ENCODE measurements at regions of chr10 and their contacts with region 1.

Region 1: GRCh38 chr10:73899423-73899822 is 11.5 kb upstream of the PLAU start:
- DNase-seq: no peak
- ATAC-seq: no peak
- H3K4me3 ChIP-seq: no peak overlapping the region
- H3K27ac ChIP-seq: no peak overlapping the region
- H3K4me1 ChIP-seq: peaks cover 0 to 3% of the 10 kb centered on the region in 2 donors
- H3K27me3 ChIP-seq: no peaks in the 10 kb centered on the region
- CTCF ChIP-seq: no peak
- POLR2A ChIP-seq: no peak

Region 2: DNA sequence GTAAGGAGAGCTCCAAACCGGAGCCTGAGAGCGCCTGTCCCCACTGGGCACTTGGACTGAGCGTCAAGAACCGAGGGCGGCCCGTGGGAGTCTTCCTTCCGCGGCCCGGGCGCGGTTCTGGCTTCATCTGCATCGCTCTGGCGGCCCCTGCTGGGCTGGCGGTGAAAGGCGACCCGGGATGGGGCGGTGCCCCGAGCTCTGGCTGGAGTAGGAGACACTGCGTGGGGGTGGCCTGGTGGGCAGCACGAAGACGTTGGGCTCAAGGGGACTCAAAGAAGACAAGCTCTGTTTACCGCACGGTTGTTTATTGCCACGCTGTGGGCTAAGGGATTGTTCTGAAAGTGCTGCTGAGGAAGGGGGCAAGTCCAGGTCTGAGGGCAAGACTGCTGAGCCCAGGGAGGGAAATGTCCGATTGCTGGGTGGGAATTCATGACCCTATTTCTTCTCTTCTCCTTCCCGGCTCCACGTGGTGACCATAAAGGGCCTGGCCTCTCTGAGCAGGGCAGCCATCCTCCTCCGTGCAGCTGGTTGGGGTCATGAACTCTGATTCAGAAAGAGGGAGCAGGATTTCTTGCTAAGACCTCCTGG is 41.3 kb after region 1 on chr10:
- in situ Hi-C with region 1: loop called in 1 of 4 experiments (anchors 5 kb)
- intact Hi-C with region 1: no loop called
- DNase-seq: peak; percentile 63 to 79
- ATAC-seq: peak; percentile 86 to 90
- H3K4me3 ChIP-seq: peak overlapping the region in 3 of 4 donors; percentile 13 to 39 (median 30)
- H3K27ac ChIP-seq: peak overlapping the region; percentile 69 to 82 (median 80)
- H3K4me1 ChIP-seq: peaks cover 29 to 42% of the 10 kb centered on the region in 2 donors
- H3K27me3 ChIP-seq: no peaks in the 10 kb centered on the region
- CTCF ChIP-seq: peak; percentile 85 to 96 (median 95)
- POLR2A ChIP-seq: no peak